ENCODE measurements at regions of chr6 and their contacts with region 1.

Region 1: DNA sequence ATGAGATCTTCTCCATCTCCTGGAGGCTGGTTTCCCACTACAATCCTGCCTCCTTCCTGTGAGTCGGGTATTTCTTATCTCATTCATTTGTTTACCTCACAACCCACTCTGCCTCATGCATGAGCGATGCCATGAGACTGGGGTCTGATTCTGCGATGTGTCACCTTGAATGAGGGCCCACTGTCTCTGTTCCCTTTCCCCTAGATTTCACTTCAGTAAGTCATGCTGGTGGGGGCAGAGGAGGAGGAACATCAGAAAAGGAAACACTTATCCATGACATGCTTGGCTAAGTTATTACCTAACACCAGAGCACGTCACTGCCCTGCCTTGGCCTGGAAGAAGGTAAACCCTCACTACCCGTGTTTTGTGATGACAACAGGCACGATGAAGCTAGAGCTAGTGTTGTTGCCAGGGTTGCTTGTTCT is 337.4 kb upstream of the PRDM1 start:
- DNase-seq: no peak
- H3K4me3 ChIP-seq: no peak overlapping the region
- H3K27ac ChIP-seq: no peak overlapping the region
- H3K27me3 ChIP-seq: peaks cover 0 to 5% (median 0%) of the 10 kb centered on the region in 45 donors
- CTCF ChIP-seq: no peak

Region 2: GRCh38 chr6:105810105-105810921 is 61.6 kb after region 1 on chr6:
- intact Hi-C with region 1: no loop called
- DNase-seq: peak in 5 of 10 donors; percentile 25 to 63 (median 40)
- H3K4me3 ChIP-seq: no peak overlapping the region
- H3K27ac ChIP-seq: peak overlapping the region in 25 of 59 donors; percentile 2 to 68 (median 40)
- H3K27me3 ChIP-seq: no peaks in the 10 kb centered on the region
- CTCF ChIP-seq: no peak

Region 3: GRCh38 chr6:106237286-106237685 is 488.5 kb after region 1 on chr6:
- intact Hi-C with region 1: loop called in 1 of 2 experiments (anchors 10 kb)
- DNase-seq: no peak
- H3K4me3 ChIP-seq: no peak overlapping the region
- H3K27ac ChIP-seq: no peak overlapping the region
- H3K27me3 ChIP-seq: no peaks in the 10 kb centered on the region
- CTCF ChIP-seq: no peak